ENCODE measurements at regions of chr20 and their contacts with region 1.

Region 1: DNA sequence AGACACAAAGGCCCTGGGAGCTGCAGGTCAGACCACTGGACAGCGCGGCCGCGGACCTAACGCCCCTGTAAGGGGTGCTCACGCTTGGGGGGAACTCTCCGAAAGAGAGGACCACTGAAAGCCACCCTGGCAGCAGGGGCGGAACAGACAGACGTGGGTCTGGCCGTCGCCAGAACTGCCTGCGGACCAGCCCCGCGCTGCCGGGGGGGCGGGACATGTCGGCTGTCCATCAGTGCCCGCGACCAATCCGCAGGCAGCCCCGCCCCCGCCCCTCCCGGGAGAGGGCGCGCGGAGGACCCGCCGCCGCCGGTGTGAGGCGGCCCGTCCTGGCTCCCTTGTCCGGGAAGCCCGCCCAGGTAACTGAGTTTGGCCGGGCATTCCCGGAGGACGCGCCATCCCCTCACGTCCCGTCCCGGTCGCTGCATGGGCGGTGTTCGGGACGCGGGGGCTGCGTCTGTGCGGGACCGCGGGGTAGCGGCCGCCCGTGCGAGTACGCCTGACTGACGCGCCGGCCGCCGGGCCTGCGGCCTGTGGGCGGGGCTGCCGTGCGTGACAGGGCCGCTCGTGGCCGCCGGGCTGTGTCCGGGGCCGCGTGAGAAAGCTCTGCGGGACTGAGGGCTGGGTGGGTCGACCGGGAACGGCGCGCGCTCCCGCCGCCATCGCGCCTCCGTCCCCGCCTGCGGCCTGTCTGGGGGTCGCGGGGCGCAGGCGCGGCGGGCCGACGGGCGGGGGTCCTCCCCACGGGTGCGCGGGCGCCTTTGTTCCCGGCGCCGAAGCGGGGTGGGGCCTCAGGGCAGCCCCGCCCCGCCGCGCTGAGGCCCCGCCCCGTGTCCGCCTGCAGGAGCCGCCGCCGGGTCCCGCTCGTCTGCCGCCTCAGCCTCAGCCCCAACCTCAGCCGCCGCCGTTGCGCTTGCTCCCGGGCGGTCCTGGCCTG is at the start of gene PLCG1:
- DNase-seq: peak; percentile 88
- ATAC-seq: peak; percentile 66
- H3K4me3 Mint-ChIP-seq: peak within 1 kb of the TSS; percentile 91
- H3K27ac Mint-ChIP-seq: peak within 1 kb of the TSS; percentile 94
- H3K4me1 Mint-ChIP-seq: peaks cover 54% of the 10 kb centered on the region
- H3K27me3 Mint-ChIP-seq: no peaks in the 10 kb centered on the region
- total RNA-seq, gene PLCG1: 395 to 406 TPM

Region 2: DNA sequence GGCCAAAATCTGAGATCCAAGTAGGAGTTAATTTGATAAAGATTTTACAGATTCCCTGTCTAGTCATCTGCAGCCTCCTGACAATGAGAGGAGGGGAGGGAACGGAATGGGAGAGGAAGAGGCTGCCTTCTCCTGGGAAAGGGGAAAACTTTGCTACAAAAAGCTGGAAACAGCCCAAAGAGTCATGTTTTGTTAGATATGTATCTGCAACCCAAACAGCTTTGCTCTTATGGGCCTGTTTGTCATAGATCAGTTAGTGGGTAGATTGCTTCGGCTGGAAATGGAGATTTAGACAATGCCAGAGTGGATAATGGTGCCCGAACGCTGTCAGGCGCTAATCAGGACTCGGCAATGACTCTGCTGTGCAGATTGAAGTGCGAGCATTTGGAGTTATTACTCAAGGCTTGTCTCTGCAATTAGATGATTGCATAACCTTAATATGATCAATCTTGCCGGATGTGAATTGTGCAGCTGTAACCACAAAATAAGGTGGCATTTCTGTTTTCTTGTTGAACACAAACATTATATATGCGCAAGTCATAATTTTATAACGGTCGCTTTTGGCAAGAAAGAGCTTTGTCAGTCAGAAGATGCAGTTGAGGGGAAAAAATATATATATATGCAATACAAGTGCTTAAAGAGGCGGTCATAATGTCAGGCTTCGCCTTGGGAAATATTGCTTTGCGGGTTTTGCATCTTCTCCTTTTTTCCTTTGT is 355.5 kb before region 1 on chr20:
- CTCF ChIA-PET with region 1: no interaction called
- POLR2A ChIA-PET with region 1: no interaction called
- DNase-seq: no peak
- ATAC-seq: no peak
- H3K4me3 Mint-ChIP-seq: no peak overlapping the region
- H3K27ac Mint-ChIP-seq: no peak overlapping the region
- H3K4me1 Mint-ChIP-seq: no peaks in the 10 kb centered on the region
- H3K27me3 Mint-ChIP-seq: peaks cover 22% of the 10 kb centered on the region

Region 3: DNA sequence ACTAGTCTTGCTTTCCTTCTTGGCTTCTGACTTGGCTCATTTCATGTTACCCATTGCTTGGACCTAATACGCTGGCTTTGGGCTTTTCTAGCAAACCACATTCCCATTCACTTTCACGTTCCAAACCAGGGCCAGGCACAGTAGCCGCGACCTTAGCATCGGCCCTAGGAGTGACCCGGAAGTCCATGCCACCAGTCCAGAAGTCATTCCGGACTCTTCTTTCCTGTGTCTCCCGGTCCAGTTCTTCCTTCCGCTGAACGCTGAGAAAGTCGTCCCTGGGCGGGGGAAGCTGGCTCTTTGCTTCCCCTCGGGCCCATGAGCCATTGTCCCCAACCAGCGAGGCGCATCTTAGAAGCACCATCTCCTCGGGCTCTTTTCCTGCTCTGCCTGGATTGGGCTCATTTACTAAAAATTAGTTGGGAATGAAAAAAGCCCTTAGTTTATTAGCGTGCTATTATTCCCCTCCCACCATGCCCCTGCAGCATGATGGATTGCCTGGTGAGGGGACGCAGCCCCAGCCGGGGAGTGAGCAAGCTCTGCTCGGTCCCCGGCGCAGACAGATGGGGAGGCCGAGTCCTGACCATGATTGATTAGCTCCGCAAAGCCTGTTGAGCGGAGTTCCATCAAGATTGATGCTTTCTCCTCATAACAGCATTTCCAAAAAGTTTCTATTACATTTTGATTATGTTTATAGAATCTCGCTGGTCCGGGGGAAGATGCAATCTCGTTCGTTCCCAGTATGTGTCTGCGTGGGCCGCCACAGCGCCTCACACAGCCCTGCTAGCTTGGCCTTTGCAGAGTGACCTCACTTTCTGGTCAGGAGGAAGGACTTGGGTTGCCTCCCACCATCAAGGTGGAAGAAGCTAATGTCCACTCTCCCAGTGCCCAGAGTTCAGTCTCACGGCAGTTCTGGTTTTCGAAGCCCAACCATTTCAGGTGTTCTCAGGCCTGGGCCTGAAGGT is 223.4 kb before region 1 on chr20:
- CTCF ChIA-PET with region 1: no interaction called
- POLR2A ChIA-PET with region 1: no interaction called
- DNase-seq: no peak
- ATAC-seq: no peak
- H3K4me3 Mint-ChIP-seq: no peak overlapping the region
- H3K27ac Mint-ChIP-seq: no peak overlapping the region
- H3K4me1 Mint-ChIP-seq: peaks cover 6% of the 10 kb centered on the region
- H3K27me3 Mint-ChIP-seq: peaks cover 9% of the 10 kb centered on the region

Region 4: DNA sequence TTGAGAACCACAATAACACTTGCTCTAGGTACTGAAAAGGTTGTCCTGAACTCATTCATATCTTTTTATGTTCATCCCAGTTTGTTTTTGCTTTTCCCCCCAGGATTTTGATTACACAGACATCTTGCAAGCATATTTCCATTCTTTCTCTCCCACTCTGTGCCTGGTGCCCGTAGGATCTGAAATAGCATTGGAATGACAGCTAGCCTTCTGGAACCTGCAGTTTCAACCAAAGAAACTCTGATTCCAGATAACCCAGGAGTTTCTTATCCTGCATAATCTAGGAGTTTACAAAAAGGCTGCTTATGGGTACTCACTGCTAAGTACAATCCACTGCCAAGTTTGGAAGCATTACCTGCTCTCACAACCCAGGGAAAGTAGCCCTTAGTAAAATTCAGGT is 28.4 kb before region 1 on chr20:
- CTCF ChIA-PET with region 1: interaction called, 15 read pairs
- POLR2A ChIA-PET with region 1: no interaction called
- DNase-seq: no peak
- ATAC-seq: no peak
- H3K4me3 Mint-ChIP-seq: no peak overlapping the region
- H3K27ac Mint-ChIP-seq: no peak overlapping the region
- H3K4me1 Mint-ChIP-seq: no peaks in the 10 kb centered on the region
- H3K27me3 Mint-ChIP-seq: no peaks in the 10 kb centered on the region

Region 5: DNA sequence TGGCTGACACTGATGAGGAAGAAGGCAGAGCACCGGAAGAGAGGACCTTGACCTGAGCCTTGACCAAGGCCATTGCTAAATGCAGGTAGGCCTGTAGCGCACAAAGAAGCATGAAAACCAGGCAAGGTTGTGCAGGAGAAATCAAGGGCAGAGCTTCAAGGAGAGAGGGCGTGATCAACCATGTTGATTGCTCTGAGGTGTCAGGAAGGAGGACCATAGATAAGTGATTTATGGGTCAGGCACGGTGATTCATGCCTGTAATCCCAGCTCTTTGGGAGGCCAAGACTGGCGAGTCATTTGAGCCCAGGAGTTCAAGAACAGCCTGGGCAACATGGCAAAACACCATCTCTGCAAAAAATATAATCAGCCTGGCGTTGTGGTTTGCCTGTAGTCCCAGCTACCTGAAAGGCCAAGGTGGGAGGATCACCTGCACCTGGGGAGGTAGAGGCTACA is 12.8 kb after region 1 on chr20:
- CTCF ChIA-PET with region 1: interaction called, 347 read pairs
- POLR2A ChIA-PET with region 1: interaction called, 343 read pairs
- DNase-seq: no peak
- ATAC-seq: no peak
- H3K4me3 Mint-ChIP-seq: peak overlapping the region; percentile 0
- H3K27ac Mint-ChIP-seq: peak overlapping the region; percentile 81
- H3K4me1 Mint-ChIP-seq: peaks cover 94% of the 10 kb centered on the region
- H3K27me3 Mint-ChIP-seq: no peaks in the 10 kb centered on the region

Region 6: DNA sequence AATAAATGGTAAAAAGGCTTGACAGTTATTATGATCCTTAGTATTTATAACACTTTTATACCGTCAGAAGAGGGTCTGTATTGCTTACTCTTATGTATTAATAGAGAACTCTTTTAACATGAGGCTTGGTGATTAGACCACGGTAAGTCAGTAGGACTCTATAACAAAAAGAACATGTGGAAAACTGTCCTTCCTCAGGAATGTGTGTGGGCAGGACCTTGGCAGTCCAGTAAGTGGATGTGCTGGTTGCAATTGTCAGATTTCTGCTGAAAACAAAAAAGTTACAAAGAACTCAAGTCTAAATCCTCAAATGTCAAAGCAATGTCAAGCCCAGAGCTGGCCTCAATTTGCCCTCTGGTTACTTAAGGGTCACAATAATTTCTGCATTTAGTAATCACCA is 81.5 kb after region 1 on chr20:
- CTCF ChIA-PET with region 1: interaction called, 16 read pairs
- POLR2A ChIA-PET with region 1: interaction called, 5 read pairs
- DNase-seq: no peak
- ATAC-seq: no peak
- H3K4me3 Mint-ChIP-seq: no peak overlapping the region
- H3K27ac Mint-ChIP-seq: no peak overlapping the region
- H3K4me1 Mint-ChIP-seq: no peaks in the 10 kb centered on the region
- H3K27me3 Mint-ChIP-seq: peaks cover 3% of the 10 kb centered on the region

Region 7: DNA sequence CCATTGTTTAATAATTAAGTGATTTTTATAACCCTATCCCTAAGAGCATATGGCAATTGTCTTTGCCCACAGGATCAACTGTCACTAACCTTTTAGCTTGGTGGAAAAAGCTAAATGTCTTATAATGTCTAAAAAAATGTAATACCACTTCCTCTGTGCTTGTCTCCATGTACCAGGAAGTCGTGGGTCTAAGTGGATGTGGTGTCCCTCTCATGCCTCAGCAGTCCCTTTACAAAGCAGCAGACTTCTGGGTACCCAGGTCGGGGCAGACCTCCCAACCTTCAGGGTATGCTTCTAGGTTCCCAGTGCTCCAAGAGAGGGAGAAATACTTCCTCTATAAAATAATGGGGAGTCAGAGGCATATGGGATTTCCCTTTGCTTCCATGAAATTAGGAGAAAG is 105.9 kb after region 1 on chr20:
- CTCF ChIA-PET with region 1: interaction called, 32 read pairs
- POLR2A ChIA-PET with region 1: no interaction called
- DNase-seq: peak; percentile 59
- ATAC-seq: peak; percentile 85
- H3K4me3 Mint-ChIP-seq: no peak overlapping the region
- H3K27ac Mint-ChIP-seq: peak overlapping the region; percentile 43
- H3K4me1 Mint-ChIP-seq: peaks cover 41% of the 10 kb centered on the region
- H3K27me3 Mint-ChIP-seq: no peaks in the 10 kb centered on the region

Measured in activated CD8-positive, alpha-beta T cell treated with anti-CD3 and anti-CD28 coated beads, Interleukin-2, amount 10 ng/mL, durations not matched to agents 7 days and 5 days (primary cell).